Left cardiac atrium (tissue), 4 donors: ENCODE measurements at regions of chr12 and their contacts with region 1.

Region 1: GRCh38 chr12:10153271-10154144 is 18.4 kb downstream of the OLR1 start:
- DNase-seq: peak; percentile 72
- ATAC-seq: peak; percentile 92 to 95

Region 2: GRCh38 chr12:10190558-10191388 is 37.3 kb after region 1 on chr12:
- intact Hi-C with region 1: loop called in 1 of 2 experiments (anchors 1 kb)
- DNase-seq: peak; percentile 48
- ATAC-seq: peak; percentile 95